Breast epithelium (tissue), 4 donors: ENCODE measurements at regions of chr1 and their contacts with region 1.

Region 1: DNA sequence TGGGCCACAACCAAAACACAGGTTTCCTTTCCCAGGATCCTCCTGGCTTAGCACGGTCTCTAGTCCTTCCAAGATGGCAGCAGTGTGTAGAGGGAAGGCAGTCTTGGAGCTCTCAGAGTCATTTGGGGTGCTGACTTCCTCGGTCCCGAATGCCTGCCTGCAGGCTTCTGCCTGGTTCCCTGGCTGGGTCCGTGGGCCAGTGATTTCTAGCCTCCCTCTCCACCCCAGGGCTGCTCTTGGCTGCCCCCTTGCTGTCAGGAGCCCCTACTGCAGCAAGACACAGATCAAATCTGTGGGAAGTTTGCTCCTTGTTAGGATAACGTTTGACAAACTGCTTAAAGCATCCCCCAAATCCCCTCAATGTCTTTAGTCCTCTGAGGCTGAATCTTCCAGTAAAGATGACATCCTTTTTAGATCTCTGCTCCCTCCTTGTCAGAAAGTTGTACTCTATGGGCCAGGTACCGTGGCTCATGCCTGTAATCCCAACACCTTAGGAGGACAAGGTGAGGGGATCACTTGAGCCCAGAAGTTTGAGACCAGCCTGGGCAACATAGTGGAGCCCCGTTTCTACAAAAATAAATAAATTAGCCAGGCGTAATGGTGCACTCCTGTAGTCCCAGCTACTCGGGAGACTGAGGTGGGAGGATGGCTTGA is 272.5 kb downstream of the RRAGC start:
- DNase-seq: no peak
- H3K4me3 ChIP-seq: no peak overlapping the region
- H3K27ac ChIP-seq: no peak overlapping the region
- H3K4me1 ChIP-seq: no peaks in the 10 kb centered on the region
- H3K27me3 ChIP-seq: no peaks in the 10 kb centered on the region
- CTCF ChIP-seq: peak in 2 of 3 donors; percentile 45 to 47
- POLR2A ChIP-seq: no peak

Region 2: DNA sequence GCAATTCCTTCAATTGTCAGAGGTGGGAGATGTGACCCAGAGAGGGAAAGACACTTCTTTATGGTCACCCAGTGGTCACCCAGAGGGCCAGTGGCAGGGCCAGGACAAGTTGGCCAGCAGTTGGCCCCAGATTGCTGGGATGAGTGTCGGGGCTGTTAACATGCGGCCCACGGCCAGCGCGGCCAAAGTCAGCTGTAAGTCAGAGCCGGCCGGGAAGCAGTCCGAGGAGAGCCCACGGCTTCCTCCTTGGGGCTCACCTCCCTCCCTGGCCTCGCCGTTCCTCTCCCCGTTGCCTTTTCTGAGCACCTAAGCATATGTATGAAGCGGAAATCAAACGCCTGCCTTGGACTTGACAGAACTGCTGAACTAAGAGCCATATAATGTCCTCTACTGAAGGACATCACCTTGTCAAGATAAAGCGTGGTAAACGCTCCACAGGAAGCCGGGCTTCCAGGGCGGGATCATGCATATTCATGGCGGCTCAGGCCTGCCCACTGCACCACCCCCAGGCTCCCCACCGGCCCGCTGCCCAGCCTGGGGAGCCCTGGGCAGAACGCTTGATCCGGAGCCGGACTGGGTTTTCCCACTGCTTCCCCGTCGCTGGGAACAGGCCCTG is 295.1 kb before region 1 on chr1:
- intact Hi-C with region 1: loop called (anchors 10 kb)
- DNase-seq: no peak
- H3K4me3 ChIP-seq: peak overlapping the region in 1 of 3 donors; percentile 7
- H3K27ac ChIP-seq: no peak overlapping the region
- H3K4me1 ChIP-seq: no peaks in the 10 kb centered on the region
- H3K27me3 ChIP-seq: no peaks in the 10 kb centered on the region
- CTCF ChIP-seq: no peak
- POLR2A ChIP-seq: no peak

Region 3: GRCh38 chr1:38559161-38559824 is 27.8 kb before region 1 on chr1:
- intact Hi-C with region 1: no loop called
- DNase-seq: peak in 1 of 2 donors; percentile 45
- H3K4me3 ChIP-seq: peak overlapping the region; percentile 9 to 34 (median 29)
- H3K27ac ChIP-seq: no peak overlapping the region
- H3K4me1 ChIP-seq: peaks cover 4 to 9% of the 10 kb centered on the region in 2 donors
- H3K27me3 ChIP-seq: peaks cover 0 to 14% of the 10 kb centered on the region in 2 donors
- CTCF ChIP-seq: no peak
- POLR2A ChIP-seq: no peak